Activated T-helper 1 cell treated with anti-CD3 and anti-CD28 coated beads, Interleukin-12 subunit alpha, Interleukin-12 subunit beta, Interleukin-2, Interleukin-4 antibody, amounts not matched to agents 30 ng/mL and 10 ng/mL and 1 ng/mL, durations not matched to agents 14 hours and 24 hours and 36 hours (primary cell): ENCODE measurements at regions of chr1 and their contacts with region 1.

Region 1: GRCh38 chr1:202462342-202463076 is 114.0 kb downstream of the PPP1R12B start:
- DNase-seq: no peak
- H3K4me3 Mint-ChIP-seq: no peak overlapping the region
- H3K27ac Mint-ChIP-seq: no peak overlapping the region
- H3K4me1 Mint-ChIP-seq: peaks cover 7% of the 10 kb centered on the region
- H3K27me3 Mint-ChIP-seq: peaks cover 3% of the 10 kb centered on the region

Region 2: DNA sequence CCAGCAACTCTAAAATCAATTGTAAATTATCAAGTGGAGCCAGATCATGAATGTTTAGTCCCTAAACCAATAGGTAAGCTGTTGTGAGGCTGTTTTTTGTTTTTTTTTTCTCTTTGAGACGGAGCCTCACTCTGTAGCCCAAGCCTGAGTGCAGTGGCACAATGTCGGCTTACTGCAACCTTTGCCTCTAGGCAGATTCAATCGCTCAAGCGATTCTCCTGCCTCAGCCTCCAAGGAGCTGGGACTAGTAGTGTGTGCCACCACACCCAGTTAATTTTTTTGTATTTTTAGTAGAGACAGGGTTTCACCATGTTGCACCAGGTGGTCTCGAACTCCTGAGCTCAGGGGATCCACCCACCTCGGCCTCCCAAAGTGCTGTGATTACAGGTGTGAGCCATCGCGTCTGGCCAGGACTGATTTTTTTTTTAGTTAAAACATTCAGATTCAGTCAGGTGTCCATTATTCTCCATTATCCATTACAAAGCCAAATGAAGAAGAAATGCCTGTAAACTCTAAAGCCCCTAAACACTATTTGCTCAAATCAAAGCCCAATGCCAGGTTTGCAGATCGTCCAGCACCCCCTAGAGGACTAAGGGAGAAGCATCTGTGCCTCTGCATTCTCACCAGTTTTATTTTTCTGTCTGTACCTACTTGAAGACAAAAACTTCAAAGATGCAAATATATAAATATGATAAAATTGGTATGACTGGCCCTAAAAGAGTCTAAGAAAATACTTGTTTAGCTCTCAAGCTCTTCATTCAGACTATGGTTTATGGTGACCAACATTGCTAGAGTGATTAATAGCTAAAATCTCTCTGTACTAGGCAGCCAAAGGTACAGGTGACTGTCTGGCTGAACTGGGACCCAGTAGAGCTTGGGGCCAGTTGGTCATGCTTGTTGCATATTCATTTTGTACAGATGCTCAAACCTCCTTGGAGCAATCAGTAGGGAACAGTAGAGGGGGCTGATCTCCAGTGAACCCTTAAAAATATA is 109.1 kb after region 1 on chr1:
- intact Hi-C with region 1: loop called (anchors 1 kb)
- DNase-seq: no peak
- H3K4me3 Mint-ChIP-seq: no peak overlapping the region
- H3K27ac Mint-ChIP-seq: no peak overlapping the region
- H3K4me1 Mint-ChIP-seq: peaks cover 6% of the 10 kb centered on the region
- H3K27me3 Mint-ChIP-seq: no peaks in the 10 kb centered on the region

Region 3: GRCh38 chr1:202625416-202626360 is 163.2 kb after region 1 on chr1:
- intact Hi-C with region 1: loop called (anchors 2 kb)
- DNase-seq: peak; percentile 44
- H3K4me3 Mint-ChIP-seq: no peak overlapping the region
- H3K27ac Mint-ChIP-seq: no peak overlapping the region
- H3K4me1 Mint-ChIP-seq: peaks cover 19% of the 10 kb centered on the region
- H3K27me3 Mint-ChIP-seq: peaks cover 36% of the 10 kb centered on the region

Region 4: GRCh38 chr1:202716654-202717053 is 254.1 kb after region 1 on chr1:
- intact Hi-C with region 1: loop called (anchors 1 kb)
- DNase-seq: no peak
- H3K4me3 Mint-ChIP-seq: no peak overlapping the region
- H3K27ac Mint-ChIP-seq: no peak overlapping the region
- H3K4me1 Mint-ChIP-seq: no peaks in the 10 kb centered on the region
- H3K27me3 Mint-ChIP-seq: peaks cover 48% of the 10 kb centered on the region